ENCODE measurements at regions of chr15 and their contacts with region 1.

Region 1: GRCh38 chr15:101008158-101009139 is 89.3 kb downstream of the LRRK1 start:
- DNase-seq: peak; percentile 86
- H3K4me3 Mint-ChIP-seq: peak overlapping the region; percentile 83
- H3K27ac Mint-ChIP-seq: peak overlapping the region; percentile 61
- H3K4me1 Mint-ChIP-seq: peaks cover 19% of the 10 kb centered on the region
- H3K27me3 Mint-ChIP-seq: peaks cover 11% of the 10 kb centered on the region

Region 2: DNA sequence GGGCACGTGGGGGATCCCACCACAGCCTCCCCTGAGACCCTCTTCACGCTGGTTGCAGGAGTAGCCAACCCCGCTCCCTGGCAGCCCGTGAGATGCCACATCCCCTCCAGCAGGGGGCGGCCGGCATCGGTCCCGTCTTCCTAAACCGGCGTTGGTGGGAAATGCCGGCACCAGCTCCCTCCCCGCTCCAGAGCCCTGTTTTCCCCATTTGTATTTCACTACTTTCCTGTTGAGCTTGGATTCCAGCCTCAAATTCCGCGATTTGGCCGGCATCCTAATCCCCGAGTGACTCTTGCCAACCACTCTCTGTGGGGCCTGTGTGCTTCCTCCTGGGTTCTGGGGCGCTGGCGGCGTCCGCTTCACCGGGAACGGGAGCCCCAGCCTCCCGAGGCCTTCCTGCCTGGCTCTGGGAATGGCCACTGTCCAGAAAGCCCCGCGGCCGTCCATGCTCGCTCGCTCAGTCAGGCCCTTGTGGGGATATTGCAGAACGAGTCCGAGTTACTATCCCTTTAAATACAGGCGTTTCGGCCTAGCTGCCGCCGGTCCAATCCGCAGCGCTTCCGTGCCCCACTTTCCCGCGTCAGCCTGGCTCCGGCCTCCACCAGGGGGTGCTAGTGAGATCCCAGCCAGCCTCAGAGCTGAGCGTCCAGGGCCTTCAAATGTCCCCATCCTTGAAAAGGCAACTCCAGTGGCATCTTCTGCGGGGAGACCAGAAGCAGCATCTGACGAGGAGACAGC is 658.6 kb before region 1 on chr15:
- CTCF ChIA-PET with region 1: interaction called, 19 read pairs
- POLR2A ChIA-PET with region 1: no interaction called
- DNase-seq: peak; percentile 88
- H3K4me3 Mint-ChIP-seq: peak overlapping the region; percentile 85
- H3K27ac Mint-ChIP-seq: peak overlapping the region; percentile 84
- H3K4me1 Mint-ChIP-seq: peaks cover 10% of the 10 kb centered on the region
- H3K27me3 Mint-ChIP-seq: peaks cover 8% of the 10 kb centered on the region

Region 3: GRCh38 chr15:100890051-100890720 is 118.3 kb before region 1 on chr15:
- CTCF ChIA-PET with region 1: no interaction called
- POLR2A ChIA-PET with region 1: no interaction called
- DNase-seq: no peak
- H3K4me3 Mint-ChIP-seq: no peak overlapping the region
- H3K27ac Mint-ChIP-seq: no peak overlapping the region
- H3K4me1 Mint-ChIP-seq: no peaks in the 10 kb centered on the region
- H3K27me3 Mint-ChIP-seq: peaks cover 46% of the 10 kb centered on the region

Region 4: GRCh38 chr15:100918034-100918689 is 90.3 kb before region 1 on chr15:
- CTCF ChIA-PET with region 1: interaction called, 39 read pairs
- POLR2A ChIA-PET with region 1: no interaction called
- DNase-seq: peak; percentile 65
- H3K4me3 Mint-ChIP-seq: peak overlapping the region; percentile 50
- H3K27ac Mint-ChIP-seq: no peak overlapping the region
- H3K4me1 Mint-ChIP-seq: peaks cover 18% of the 10 kb centered on the region
- H3K27me3 Mint-ChIP-seq: peaks cover 69% of the 10 kb centered on the region

Region 5: DNA sequence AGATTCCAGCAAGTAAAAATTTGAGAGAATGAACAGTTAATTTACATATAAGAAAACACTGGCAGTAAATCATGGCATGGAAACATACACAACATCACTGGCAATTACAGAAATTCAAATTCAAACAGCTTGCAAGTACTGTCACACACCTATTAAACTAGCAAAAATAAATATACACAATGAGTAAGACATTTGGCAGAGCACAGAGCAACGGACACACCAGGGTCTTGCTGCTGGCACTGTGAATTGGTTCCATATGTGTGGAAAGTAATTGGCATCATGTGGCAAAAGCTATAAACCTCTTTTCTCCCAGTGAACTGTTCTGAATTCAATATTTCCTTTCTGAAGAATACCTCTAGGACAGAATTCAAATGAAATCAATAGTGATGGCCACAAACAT is 11.0 kb before region 1 on chr15:
- CTCF ChIA-PET with region 1: interaction called, 11 read pairs
- POLR2A ChIA-PET with region 1: no interaction called
- DNase-seq: no peak
- H3K4me3 Mint-ChIP-seq: no peak overlapping the region
- H3K27ac Mint-ChIP-seq: no peak overlapping the region
- H3K4me1 Mint-ChIP-seq: no peaks in the 10 kb centered on the region
- H3K27me3 Mint-ChIP-seq: peaks cover 22% of the 10 kb centered on the region

Region 6: DNA sequence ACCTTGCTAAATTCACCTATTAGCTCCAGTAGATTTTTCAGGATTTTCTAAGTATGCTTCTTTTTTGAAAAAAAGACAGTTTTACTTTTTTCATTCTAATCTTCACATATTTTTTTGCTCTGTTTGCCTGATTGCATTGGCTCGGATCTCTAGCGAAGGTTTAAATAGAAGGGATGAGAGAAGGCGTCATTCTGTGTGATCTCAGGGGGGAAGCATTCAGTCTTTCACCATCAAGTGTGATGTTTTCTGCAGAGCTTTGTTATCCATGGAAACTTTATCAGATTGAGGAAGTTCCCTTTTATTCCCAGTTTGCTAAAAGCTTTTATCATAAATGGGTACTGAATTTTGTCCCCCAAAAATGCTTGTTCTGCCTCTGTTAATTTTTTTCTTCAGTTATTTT is 31.0 kb after region 1 on chr15:
- CTCF ChIA-PET with region 1: no interaction called
- POLR2A ChIA-PET with region 1: no interaction called
- DNase-seq: no peak
- H3K4me3 Mint-ChIP-seq: no peak overlapping the region
- H3K27ac Mint-ChIP-seq: no peak overlapping the region
- H3K4me1 Mint-ChIP-seq: no peaks in the 10 kb centered on the region
- H3K27me3 Mint-ChIP-seq: peaks cover 47% of the 10 kb centered on the region

Region 7: DNA sequence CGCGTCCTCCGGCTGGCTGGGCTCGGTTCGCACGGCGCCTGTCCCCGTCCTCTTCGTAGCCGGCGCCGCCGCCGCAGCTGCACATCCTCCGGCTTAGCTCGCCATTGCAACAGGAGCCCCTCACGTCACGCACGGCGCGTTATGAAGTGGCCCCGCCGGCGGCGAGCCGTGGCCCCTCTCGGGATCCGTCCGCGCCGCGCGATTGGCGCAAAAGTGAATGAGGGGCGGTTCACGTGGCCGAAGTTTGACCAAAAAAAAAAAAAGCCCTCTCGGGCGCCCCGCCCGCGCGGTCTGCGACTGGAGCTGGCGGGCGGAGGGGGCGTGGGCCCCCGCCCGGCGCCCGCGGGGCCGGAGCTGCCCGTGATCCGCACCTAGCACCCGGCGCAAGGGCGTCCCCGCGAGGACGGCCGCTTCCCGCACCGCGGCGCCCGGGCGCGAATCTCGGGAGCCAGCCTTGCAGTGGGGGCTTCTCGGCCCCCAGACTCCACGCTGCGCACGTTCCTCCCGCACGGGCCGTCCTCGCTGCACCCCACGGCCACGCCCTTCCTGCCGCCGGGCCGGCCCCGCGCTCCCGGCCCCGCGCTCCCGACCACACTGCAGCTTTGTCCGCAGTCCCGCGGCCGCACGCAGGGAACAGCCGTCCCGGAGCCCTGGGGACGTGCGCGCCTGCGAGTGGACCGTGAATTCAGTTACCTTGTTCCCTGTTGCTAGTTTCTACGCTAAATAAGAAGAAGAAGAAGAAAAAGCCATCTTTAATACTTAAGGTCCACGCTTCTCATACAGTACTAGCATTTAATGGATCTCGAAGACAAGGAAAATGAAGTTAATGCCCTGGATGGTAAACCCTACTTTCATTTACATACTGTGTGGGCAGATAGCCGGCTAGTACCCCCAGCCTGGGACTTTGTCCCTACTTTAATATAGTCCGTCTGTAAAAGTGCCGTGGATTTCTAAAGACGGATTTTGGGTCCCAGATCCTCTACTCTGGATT is 243.7 kb after region 1 on chr15 and contains the start of gene CHSY1:
- CTCF ChIA-PET with region 1: interaction called, 22 read pairs
- POLR2A ChIA-PET with region 1: no interaction called
- DNase-seq: peak; percentile 85
- H3K4me3 Mint-ChIP-seq: peak within 1 kb of the TSS; percentile 89
- H3K27ac Mint-ChIP-seq: peak within 1 kb of the TSS; percentile 97
- H3K4me1 Mint-ChIP-seq: peaks cover 71% of the 10 kb centered on the region
- H3K27me3 Mint-ChIP-seq: no peaks in the 10 kb centered on the region
- total RNA-seq, gene CHSY1: 32.5 to 39.6 TPM

Region 8: DNA sequence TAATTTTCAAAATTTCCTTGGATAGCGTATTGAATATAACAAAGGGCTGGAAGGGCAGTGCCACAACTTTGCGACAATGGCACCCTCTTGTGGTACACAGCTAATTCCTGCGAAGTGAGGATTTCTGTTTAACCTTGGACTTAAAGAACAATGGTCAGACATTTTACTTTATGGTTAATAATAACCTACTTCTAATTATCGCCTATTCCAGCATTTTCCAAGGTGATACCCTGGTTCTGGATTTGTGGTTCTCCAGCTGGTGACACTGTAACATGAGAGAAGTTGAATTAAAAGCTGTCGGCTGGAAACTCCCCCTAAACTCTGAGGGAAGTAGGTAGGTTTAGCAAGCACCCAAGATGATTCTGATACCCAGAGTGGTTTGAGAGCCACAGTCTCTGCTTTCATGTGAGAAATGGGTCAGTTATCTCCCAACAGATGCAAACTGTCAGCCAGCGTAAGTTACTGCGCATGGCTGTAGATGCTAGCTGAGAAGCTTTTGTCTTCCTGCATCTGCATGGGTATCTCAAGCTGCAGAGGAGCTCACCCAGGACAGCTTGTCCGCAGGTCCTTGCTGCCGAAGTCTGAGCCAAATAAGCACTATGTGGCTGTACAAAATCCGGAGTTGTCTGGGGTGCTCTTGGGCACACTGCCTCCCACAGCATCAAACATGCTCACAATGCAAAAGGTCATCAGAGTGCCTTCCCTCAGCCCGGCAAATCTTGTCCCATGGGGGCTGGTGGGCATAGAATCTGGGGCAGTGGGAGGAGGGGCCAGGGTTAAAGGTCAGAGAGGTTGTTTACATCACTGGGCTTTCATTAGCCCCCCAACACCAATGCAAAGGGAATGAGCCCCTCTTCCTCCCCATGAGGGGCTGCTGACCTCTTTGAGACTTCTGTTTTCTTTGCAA is 250.0 kb after region 1 on chr15:
- CTCF ChIA-PET with region 1: interaction called, 22 read pairs
- POLR2A ChIA-PET with region 1: interaction called, 4 read pairs
- DNase-seq: peak; percentile 63
- H3K4me3 Mint-ChIP-seq: no peak overlapping the region
- H3K27ac Mint-ChIP-seq: no peak overlapping the region
- H3K4me1 Mint-ChIP-seq: peaks cover 30% of the 10 kb centered on the region
- H3K27me3 Mint-ChIP-seq: peaks cover 15% of the 10 kb centered on the region

Region 9: GRCh38 chr15:101269479-101270223 is 261.2 kb after region 1 on chr15:
- CTCF ChIA-PET with region 1: interaction called, 19 read pairs
- POLR2A ChIA-PET with region 1: no interaction called
- DNase-seq: no peak
- H3K4me3 Mint-ChIP-seq: no peak overlapping the region
- H3K27ac Mint-ChIP-seq: no peak overlapping the region
- H3K4me1 Mint-ChIP-seq: peaks cover 4% of the 10 kb centered on the region
- H3K27me3 Mint-ChIP-seq: no peaks in the 10 kb centered on the region

Measured in activated CD4-positive, alpha-beta T cell treated with anti-CD3 and anti-CD28 coated beads, Interleukin-2, amount 10 ng/mL, durations not matched to agents 7 days and 5 days (primary cell).